BJ (cell line): ENCODE measurements at regions of chr6 and their contacts with region 1.

Region 1: DNA sequence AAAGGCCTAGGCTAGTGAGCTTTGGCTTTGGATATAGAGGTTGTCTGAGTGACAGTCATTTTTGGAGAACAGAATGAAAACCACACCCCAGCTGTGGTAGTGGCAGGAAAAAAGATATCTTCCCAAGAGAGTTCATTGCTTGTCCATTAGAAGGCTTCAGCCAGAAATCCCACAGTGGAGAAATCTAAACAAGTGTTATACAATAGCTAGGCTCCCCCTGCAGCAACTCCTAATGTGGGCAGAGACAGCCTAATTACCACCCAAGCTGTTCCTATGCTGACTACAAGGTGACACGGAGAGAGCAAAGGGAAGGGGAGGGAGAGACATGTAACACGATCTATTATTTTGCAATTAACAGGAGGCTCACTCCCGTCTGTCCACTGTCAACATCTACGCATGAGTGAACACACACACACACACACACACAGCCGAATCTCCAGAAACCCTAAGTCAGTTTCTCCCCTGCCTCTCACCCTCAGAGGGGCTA is 147.5 kb upstream of the TCF21 start:
- DNase-seq: no peak
- H3K4me3 ChIP-seq: no peak overlapping the region
- H3K27me3 ChIP-seq: no peaks in the 10 kb centered on the region
- CTCF ChIP-seq: no peak

Region 2: DNA sequence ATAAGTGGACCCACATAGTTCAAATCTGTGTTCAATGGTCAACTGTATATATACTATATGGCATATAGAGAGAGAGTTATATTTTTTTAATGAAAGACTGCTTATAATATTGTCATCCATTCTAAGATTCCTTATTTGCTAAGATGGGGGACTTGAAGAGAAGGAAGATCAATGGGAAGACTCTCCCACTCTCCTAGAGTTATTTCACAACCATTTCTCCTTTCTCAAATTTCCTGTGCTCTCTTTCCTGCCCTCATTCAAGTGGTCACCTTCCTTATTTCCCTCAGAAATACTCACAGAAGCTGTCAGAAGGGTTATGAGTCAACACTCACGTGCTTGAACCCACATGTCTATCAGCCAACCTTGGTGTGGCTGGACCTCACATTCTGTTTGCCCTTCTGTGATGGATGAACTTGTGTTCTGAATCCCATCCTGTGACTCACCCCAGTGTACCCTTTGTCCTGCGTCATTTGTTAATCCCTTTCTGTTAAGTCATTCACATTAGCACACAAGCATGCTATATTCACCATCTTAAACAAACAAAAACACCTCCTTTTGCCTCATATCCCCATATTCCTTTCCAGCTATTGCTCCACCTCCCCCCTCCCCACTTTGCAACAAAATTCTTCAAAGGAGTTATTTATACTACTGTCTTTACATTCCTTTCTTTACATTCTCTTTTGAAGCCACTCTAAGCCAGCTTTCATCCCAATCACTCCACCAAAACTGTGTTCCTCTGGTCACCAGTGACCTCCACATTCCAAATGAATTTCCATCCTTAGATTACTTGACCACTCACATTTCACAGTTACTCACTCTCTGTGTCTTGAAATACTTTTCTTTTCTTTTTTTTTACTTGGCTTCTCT is 131.8 kb before region 1 on chr6:
- CTCF ChIA-PET with region 1: no interaction called
- POLR2A ChIA-PET with region 1: interaction called, 22 read pairs
- DNase-seq: peak; percentile 80
- H3K4me3 ChIP-seq: no peak overlapping the region
- H3K27me3 ChIP-seq: no peaks in the 10 kb centered on the region
- CTCF ChIP-seq: no peak